ENCODE measurements at regions of chr13 and their contacts with region 1.

Region 1: GRCh38 chr13:113490496-113491417 is at the start of gene DCUN1D2:
- DNase-seq: peak; percentile 91
- H3K4me3 Mint-ChIP-seq: peak within 1 kb of the TSS; percentile 91
- H3K27ac Mint-ChIP-seq: peak within 1 kb of the TSS; percentile 68
- H3K4me1 Mint-ChIP-seq: peaks cover 42% of the 10 kb centered on the region
- H3K27me3 Mint-ChIP-seq: no peaks in the 10 kb centered on the region
- CTCF ChIP-seq: no peak
- total RNA-seq, gene DCUN1D2: 20.4 and 22.0 TPM in 2 replicates

Region 2: GRCh38 chr13:113474179-113474578 is 16.6 kb before region 1 on chr13:
- CTCF ChIA-PET with region 1: interaction called, 4 read pairs
- POLR2A ChIA-PET with region 1: interaction called, 28 read pairs
- intact Hi-C with region 1: no loop called
- DNase-seq: peak; percentile 82
- H3K4me3 Mint-ChIP-seq: no peak overlapping the region
- H3K27ac Mint-ChIP-seq: no peak overlapping the region
- H3K4me1 Mint-ChIP-seq: no peaks in the 10 kb centered on the region
- H3K27me3 Mint-ChIP-seq: no peaks in the 10 kb centered on the region
- CTCF ChIP-seq: no peak

Region 3: DNA sequence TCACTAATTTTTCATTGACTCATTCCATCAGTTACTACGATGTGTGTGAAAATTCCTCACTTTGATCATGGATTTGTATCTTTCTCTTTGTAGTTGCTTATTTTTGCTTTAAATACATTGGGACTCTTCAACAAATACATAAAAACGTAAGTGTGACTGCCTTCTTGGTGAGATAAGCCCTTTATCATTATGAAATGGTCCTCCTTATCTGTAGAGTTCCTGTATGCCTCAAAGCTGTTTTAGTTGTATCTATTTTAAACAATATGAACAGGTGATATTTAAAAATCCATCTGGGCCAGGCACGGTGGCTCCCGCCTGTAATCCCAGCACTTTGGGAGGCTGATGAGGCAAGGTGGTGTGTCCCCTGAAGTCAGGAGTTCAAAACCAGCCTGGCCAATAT is 11.6 kb before region 1 on chr13:
- CTCF ChIA-PET with region 1: interaction called, 4 read pairs
- POLR2A ChIA-PET with region 1: interaction called, 28 read pairs
- intact Hi-C with region 1: no loop called
- DNase-seq: no peak
- H3K4me3 Mint-ChIP-seq: no peak overlapping the region
- H3K27ac Mint-ChIP-seq: no peak overlapping the region
- H3K4me1 Mint-ChIP-seq: no peaks in the 10 kb centered on the region
- H3K27me3 Mint-ChIP-seq: no peaks in the 10 kb centered on the region
- CTCF ChIP-seq: no peak

Region 4: DNA sequence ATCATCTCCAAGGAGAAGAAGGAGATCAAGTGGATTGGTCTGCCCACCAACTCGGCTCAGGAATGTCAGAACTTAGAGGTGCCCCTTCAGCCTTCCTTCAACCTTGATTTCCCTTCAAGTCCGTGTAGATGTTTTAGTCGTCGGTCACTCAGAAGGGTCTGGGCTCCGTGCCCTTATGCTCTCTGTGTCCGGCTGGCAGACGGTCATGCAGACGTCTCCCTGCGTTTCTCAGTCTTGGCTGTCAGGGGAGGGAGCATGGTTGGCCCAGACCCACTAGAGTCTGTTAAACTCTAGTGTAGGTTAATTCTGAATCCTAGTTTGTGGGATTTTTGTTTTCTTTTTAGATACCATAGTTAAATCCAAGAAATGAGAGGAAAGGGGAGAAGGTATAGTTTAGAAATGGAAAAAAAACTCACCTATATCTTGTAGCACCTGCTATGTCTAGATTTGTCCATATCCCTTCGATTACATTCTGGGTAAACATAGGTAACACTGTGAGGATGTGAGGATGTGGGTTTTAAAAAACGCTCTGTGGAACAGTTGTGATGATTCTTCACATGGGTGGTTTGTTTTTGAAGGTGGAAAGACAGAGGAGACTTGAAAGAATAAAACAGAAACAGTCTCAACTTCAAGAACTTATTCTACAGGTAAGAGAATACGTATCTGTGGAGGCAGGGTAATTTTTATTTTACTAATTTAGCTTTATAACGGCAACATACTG is 143.4 kb after region 1 on chr13:
- CTCF ChIA-PET with region 1: no interaction called
- POLR2A ChIA-PET with region 1: no interaction called
- intact Hi-C with region 1: no loop called
- DNase-seq: no peak
- H3K4me3 Mint-ChIP-seq: no peak overlapping the region
- H3K27ac Mint-ChIP-seq: no peak overlapping the region
- H3K4me1 Mint-ChIP-seq: no peaks in the 10 kb centered on the region
- H3K27me3 Mint-ChIP-seq: no peaks in the 10 kb centered on the region
- CTCF ChIP-seq: no peak

Measured in MCF 10A (cell line).